OCI-LY7 (cell line): ENCODE measurements at regions of chr2 and their contacts with region 1.

Region 1: GRCh38 chr2:157468931-157469708 is 25.2 kb upstream of the CYTIP start:
- DNase-seq: peak; percentile 90
- H3K4me3 ChIP-seq: peak overlapping the region; percentile 64
- H3K27ac ChIP-seq: peak overlapping the region; percentile 96
- H3K4me1 ChIP-seq: peaks cover 53% of the 10 kb centered on the region
- CTCF ChIP-seq: no peak

Region 2: GRCh38 chr2:157093666-157094065 is 375.5 kb before region 1 on chr2:
- CTCF ChIA-PET with region 1: no interaction called
- POLR2A ChIA-PET with region 1: interaction called, 10 read pairs
- intact Hi-C with region 1: no loop called
- DNase-seq: no peak
- H3K4me3 ChIP-seq: no peak overlapping the region
- H3K27ac ChIP-seq: no peak overlapping the region
- H3K4me1 ChIP-seq: no peaks in the 10 kb centered on the region
- CTCF ChIP-seq: no peak

Region 3: DNA sequence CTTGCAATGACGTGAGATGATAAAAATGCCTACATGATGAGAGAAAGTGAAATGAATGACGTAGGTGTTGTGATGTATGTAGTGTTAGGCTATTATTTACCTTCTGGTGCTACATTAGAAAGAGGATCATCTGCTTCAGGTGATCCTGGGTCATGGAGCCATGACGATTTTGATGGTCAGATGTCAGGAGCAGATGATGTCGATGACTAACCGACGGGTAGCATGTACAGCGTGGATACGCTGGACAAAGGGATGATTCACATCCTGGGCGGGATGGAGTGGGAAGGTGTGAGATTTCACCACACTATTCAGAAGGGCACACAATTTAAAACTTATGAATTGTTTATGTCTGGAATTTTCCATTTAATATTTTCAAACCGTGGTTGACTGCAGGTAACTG is 203.0 kb after region 1 on chr2:
- CTCF ChIA-PET with region 1: no interaction called
- POLR2A ChIA-PET with region 1: no interaction called
- intact Hi-C with region 1: no loop called
- DNase-seq: no peak
- H3K4me3 ChIP-seq: no peak overlapping the region
- H3K27ac ChIP-seq: no peak overlapping the region
- H3K4me1 ChIP-seq: no peaks in the 10 kb centered on the region
- CTCF ChIP-seq: no peak